ENCODE measurements at regions of chr12 and their contacts with region 1.

Region 1: GRCh38 chr12:77010691-77011548 is 54.4 kb downstream of the E2F7 start:
- DNase-seq: peak; percentile 29 to 40
- ATAC-seq: peak in 1 of 2 donors; percentile 65
- H3K4me3 ChIP-seq: peak overlapping the region in 2 of 4 donors; percentile 11 to 29
- H3K27ac ChIP-seq: no peak overlapping the region
- H3K4me1 ChIP-seq: peaks cover 3 to 4% of the 10 kb centered on the region in 2 donors
- H3K27me3 ChIP-seq: no peaks in the 10 kb centered on the region
- CTCF ChIP-seq: peak; percentile 38 to 91 (median 57)
- POLR2A ChIP-seq: no peak

Region 2: DNA sequence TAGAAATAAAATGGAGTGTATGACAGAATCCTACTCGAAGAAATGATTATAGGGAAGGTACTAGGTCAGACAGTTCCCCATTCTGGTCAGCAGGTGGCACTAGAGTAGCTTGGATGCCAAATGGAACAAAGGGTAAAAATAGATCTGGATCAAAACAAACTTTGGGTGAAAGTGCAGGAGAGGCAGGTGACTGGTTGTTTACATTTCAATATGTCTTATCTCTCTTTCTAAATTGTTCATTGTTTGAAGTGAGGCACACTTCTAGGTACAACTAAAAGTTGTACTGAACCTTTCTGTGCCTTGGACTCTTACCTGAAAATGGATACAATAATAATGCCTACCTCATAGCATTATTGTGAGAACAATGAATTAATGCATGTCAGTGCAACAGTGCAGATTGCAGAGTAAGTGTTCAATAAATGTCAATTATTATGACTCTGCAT is 389.3 kb before region 1 on chr12:
- in situ Hi-C with region 1: loop called in 3 of 4 experiments (anchors 10 to 25 kb)
- intact Hi-C with region 1: no loop called
- DNase-seq: peak; percentile 31 to 63
- ATAC-seq: peak; percentile 93 to 94
- H3K4me3 ChIP-seq: no peak overlapping the region
- H3K27ac ChIP-seq: peak overlapping the region in 3 of 4 donors; percentile 10 to 56 (median 53)
- H3K4me1 ChIP-seq: peaks cover 3 to 6% of the 10 kb centered on the region in 2 donors
- H3K27me3 ChIP-seq: no peaks in the 10 kb centered on the region
- CTCF ChIP-seq: peak; percentile 91 to 98 (median 92)
- POLR2A ChIP-seq: no peak

Region 3: DNA sequence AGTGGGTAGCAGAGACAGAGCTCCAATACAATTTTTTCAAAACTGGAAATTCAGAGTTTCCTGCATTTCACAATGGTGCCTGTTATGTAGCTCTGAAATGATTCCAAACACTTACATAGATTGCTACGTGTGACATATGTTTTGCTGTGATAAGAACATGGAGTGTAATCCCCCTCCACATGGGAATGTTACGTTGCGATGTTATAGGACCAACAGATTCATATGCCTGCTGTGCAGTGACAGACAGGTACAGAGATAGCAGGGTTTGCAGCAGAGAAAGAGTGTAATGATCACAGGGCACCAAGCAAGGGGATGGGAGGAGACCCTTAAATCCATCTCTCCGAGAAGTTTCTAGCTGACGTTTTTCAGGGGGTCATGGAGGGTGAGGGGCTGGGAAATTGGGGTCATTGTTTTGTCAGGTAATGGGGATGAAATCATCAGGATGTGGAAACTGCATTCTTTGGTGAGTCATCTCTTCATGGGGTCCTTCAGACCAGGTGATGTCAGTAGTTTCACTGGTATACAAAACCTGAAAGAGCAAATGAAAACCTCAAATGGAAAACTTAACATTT is 374.7 kb before region 1 on chr12:
- in situ Hi-C with region 1: loop called in 1 of 4 experiments (anchors 25 kb)
- intact Hi-C with region 1: no loop called
- DNase-seq: no peak
- ATAC-seq: no peak
- H3K4me3 ChIP-seq: no peak overlapping the region
- H3K27ac ChIP-seq: no peak overlapping the region
- H3K4me1 ChIP-seq: no peaks in the 10 kb centered on the region
- H3K27me3 ChIP-seq: no peaks in the 10 kb centered on the region
- CTCF ChIP-seq: no peak
- POLR2A ChIP-seq: no peak

Region 4: GRCh38 chr12:76790564-76791552 is 220.1 kb before region 1 on chr12:
- in situ Hi-C with region 1: loop called in 1 of 4 experiments (anchors 25 kb)
- intact Hi-C with region 1: no loop called
- DNase-seq: no peak
- ATAC-seq: peak in 1 of 2 donors; percentile 58
- H3K4me3 ChIP-seq: no peak overlapping the region
- H3K27ac ChIP-seq: peak overlapping the region in 3 of 4 donors; percentile 27 to 59 (median 27)
- H3K4me1 ChIP-seq: peaks cover 33 to 40% of the 10 kb centered on the region in 2 donors
- H3K27me3 ChIP-seq: no peaks in the 10 kb centered on the region
- CTCF ChIP-seq: peak; percentile 70 to 96 (median 75)
- POLR2A ChIP-seq: no peak

Region 5: GRCh38 chr12:77102691-77103090 is 91.8 kb after region 1 on chr12:
- in situ Hi-C with region 1: no loop called
- intact Hi-C with region 1: no loop called
- DNase-seq: no peak
- ATAC-seq: no peak
- H3K4me3 ChIP-seq: no peak overlapping the region
- H3K27ac ChIP-seq: no peak overlapping the region
- H3K4me1 ChIP-seq: no peaks in the 10 kb centered on the region
- H3K27me3 ChIP-seq: no peaks in the 10 kb centered on the region
- CTCF ChIP-seq: no peak
- POLR2A ChIP-seq: no peak

Measured in gastrocnemius medialis (tissue), 4 donors.